K562 (cell line): ENCODE measurements at regions of chr9 and their contacts with region 1.

Region 1: DNA sequence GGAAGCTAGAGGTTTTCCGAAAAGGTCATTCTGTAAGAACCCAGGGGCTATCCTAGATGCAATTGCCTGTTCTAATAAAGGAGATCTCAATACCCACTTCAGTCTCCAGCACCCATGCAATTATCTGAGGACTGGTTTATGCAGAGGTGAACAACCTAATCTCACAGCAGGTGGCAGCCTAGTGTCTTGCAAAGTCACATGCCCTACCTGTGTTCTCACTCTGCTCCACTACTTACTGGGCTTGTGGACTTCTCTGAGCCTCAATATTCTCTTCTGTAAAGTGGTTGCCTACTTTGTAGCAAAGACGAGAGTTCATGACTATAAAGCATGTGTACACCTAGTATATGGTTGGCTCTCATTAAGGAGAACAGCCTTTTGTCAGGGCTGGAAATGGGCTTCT is 21.0 kb upstream of the ALDH1B1 start:
- DNase-seq: peak; percentile 52 to 70 (median 64)
- ATAC-seq: peak; percentile 96
- H3K4me3 ChIP-seq: no peak overlapping the region
- H3K27ac ChIP-seq: no peak overlapping the region
- H3K4me1 ChIP-seq: no peaks in the 10 kb centered on the region
- H3K27me3 ChIP-seq: peaks cover 14 to 25% of the 10 kb centered on the region in 2 experiments; a peak in 3 of 5 replicates
- CTCF ChIP-seq: peak; percentile 71 to 91 (median 77)
- EP300 ChIP-seq: no peak
- POLR2A ChIP-seq: no peak
- RAD21 ChIP-seq: peak; percentile 98

Region 2: DNA sequence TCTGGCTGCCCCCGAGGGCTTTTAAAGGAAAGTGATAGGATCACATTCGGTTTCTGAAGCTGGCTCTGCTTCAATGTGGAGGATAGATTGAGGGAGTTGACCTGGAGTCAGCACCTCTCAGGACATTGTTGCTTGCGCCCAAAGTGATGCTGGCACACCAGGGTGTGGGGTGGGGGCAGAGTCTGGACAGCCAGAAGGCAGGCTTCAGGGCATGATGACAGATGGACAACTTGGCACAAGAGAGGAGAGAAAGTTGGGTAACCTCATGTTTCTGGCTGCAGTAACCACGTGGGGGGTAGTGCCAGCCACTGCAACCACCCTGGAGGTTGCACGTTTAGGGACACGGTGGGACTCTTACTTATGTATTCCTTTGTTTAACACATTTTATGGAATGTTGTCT is 30.5 kb after region 1 on chr9:
- CTCF ChIA-PET with region 1: interaction called, 113 read pairs
- POLR2A ChIA-PET with region 1: interaction called, 4 read pairs
- in situ Hi-C with region 1: no loop called
- intact Hi-C with region 1: loop called (anchors 1 kb)
- DNase-seq: no peak
- ATAC-seq: no peak
- H3K4me3 ChIP-seq: no peak overlapping the region
- H3K27ac ChIP-seq: no peak overlapping the region
- H3K4me1 ChIP-seq: no peaks in the 10 kb centered on the region; a peak in 2 of 5 replicates
- H3K27me3 ChIP-seq: peaks cover 33 to 50% of the 10 kb centered on the region in 2 experiments
- CTCF ChIP-seq: no peak
- EP300 ChIP-seq: no peak
- POLR2A ChIP-seq: no peak
- RAD21 ChIP-seq: no peak